ENCODE measurements at regions of chr11 and their contacts with region 1.

Region 1: GRCh38 chr11:87819151-87819550 is 356.1 kb downstream of the RAB38 start:
- DNase-seq: no peak
- ATAC-seq: peak; percentile 37; the same call in 1 of the 2 replicates
- H3K4me3 ChIP-seq: no peak overlapping the region
- H3K27ac ChIP-seq: no peak overlapping the region
- H3K4me1 ChIP-seq: no peaks in the 10 kb centered on the region
- H3K27me3 ChIP-seq: no peaks in the 10 kb centered on the region
- CTCF ChIP-seq: no peak

Region 2: GRCh38 chr11:87529486-87529885 is 289.7 kb before region 1 on chr11:
- CTCF ChIA-PET with region 1: no interaction called
- POLR2A ChIA-PET with region 1: no interaction called
- intact Hi-C with region 1: no loop called
- DNase-seq: no peak
- ATAC-seq: no peak
- H3K4me3 ChIP-seq: no peak overlapping the region
- H3K27ac ChIP-seq: no peak overlapping the region
- H3K4me1 ChIP-seq: no peaks in the 10 kb centered on the region
- H3K27me3 ChIP-seq: 0 out of 2 replicates have a peak, but pooled peaks cover 5% of the 10 kb centered on the region
- CTCF ChIP-seq: no peak

Region 3: DNA sequence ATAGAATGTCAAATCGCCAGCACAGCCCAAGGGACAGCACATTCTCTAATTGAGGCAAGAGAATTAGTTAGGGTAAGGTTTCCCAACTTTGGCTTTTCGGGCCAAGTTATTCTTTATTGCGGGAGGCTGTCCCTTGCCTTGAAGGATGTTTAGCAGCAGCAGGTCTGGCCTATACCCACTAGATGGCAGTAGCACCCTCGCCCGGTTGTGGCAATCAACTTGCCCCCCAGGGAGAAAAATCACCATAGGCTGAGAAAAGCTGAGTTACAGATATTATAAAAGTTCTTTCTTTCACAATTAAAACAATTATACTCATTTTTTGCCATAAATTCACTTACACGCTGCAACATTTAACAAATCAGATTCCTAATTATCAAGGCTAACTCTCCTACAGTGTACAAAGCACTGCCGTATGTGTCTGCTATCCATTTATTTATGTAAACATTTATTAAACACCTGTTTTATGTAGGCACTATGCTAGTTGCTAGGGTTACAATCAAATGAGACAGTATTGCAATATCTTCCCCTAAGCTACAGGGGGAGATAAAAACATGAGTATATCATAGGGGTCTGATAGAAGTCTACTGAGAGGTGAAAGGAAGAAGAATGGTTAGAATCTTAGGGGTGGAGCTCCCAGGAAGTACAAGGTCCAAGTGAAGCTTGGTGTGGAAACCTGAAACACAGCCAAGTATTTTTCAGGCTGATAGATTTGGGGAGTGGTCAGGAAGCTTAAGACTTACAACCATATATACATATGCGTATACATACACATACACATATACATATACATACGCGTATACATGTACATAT is 96.2 kb before region 1 on chr11:
- CTCF ChIA-PET with region 1: interaction called, 10 read pairs
- POLR2A ChIA-PET with region 1: no interaction called
- intact Hi-C with region 1: no loop called
- DNase-seq: peak; percentile 64
- ATAC-seq: peak; percentile 72
- H3K4me3 ChIP-seq: 0 out of 2 replicates have a peak overlapping the region, but pooled peaks have one; percentile 8
- H3K27ac ChIP-seq: no peak overlapping the region
- H3K4me1 ChIP-seq: peaks cover 11% of the 10 kb centered on the region
- H3K27me3 ChIP-seq: no peaks in the 10 kb centered on the region
- CTCF ChIP-seq: peak; percentile 94

Region 4: GRCh38 chr11:87743007-87743406 is 76.1 kb before region 1 on chr11:
- CTCF ChIA-PET with region 1: no interaction called
- POLR2A ChIA-PET with region 1: no interaction called
- intact Hi-C with region 1: loop called (anchors 1 kb)
- DNase-seq: peak; percentile 51
- ATAC-seq: peak; percentile 44; the same call in 1 of the 2 replicates
- H3K4me3 ChIP-seq: no peak overlapping the region
- H3K27ac ChIP-seq: no peak overlapping the region
- H3K4me1 ChIP-seq: no peaks in the 10 kb centered on the region
- H3K27me3 ChIP-seq: no peaks in the 10 kb centered on the region
- CTCF ChIP-seq: peak; percentile 65

Region 5: GRCh38 chr11:87769661-87770060 is 49.5 kb before region 1 on chr11:
- CTCF ChIA-PET with region 1: no interaction called
- POLR2A ChIA-PET with region 1: no interaction called
- intact Hi-C with region 1: loop called (anchors 2 kb)
- DNase-seq: no peak
- ATAC-seq: no peak
- H3K4me3 ChIP-seq: no peak overlapping the region
- H3K27ac ChIP-seq: no peak overlapping the region
- H3K4me1 ChIP-seq: peaks cover 3% of the 10 kb centered on the region
- H3K27me3 ChIP-seq: no peaks in the 10 kb centered on the region; the same call in 1 of the 2 replicates
- CTCF ChIP-seq: no peak

Region 6: DNA sequence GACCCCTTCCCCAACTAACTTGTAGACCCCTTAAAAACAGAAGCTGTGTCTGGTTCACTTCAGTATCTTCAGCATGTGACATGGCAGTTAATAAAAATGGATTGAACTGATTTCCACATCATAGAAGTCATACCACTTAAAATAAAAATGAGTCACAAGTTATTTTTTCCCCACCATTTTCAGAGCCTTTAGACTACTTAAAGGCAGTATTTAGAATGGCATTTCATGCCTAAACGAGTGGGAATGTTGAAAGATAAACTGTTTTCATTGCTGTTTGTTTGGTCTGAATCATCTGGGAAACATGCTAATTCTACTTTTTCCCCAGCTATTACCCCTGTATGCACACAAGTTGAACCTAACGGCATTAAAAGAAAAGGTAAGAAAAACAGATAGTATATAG is 32.1 kb after region 1 on chr11:
- CTCF ChIA-PET with region 1: no interaction called
- POLR2A ChIA-PET with region 1: no interaction called
- intact Hi-C with region 1: loop called (anchors 2 kb)
- DNase-seq: peak; percentile 86
- ATAC-seq: peak; percentile 96
- H3K4me3 ChIP-seq: no peak overlapping the region
- H3K27ac ChIP-seq: peak overlapping the region; percentile 91
- H3K4me1 ChIP-seq: peaks cover 15% of the 10 kb centered on the region
- H3K27me3 ChIP-seq: no peaks in the 10 kb centered on the region
- CTCF ChIP-seq: no peak